ENCODE measurements at regions of chr20 and their contacts with region 1.

Region 1: GRCh38 chr20:4064144-4064909 is 49.0 kb upstream of the RNF24 start:
- H3K4me3 Mint-ChIP-seq: peak overlapping the region; percentile 39
- H3K27ac Mint-ChIP-seq: peak overlapping the region; percentile 88
- H3K4me1 Mint-ChIP-seq: peaks cover 95% of the 10 kb centered on the region
- H3K27me3 Mint-ChIP-seq: no peaks in the 10 kb centered on the region

Region 2: GRCh38 chr20:4026093-4026601 is 38.2 kb before region 1 on chr20:
- intact Hi-C with region 1: loop called (anchors 5 kb)
- H3K4me3 Mint-ChIP-seq: no peak overlapping the region
- H3K27ac Mint-ChIP-seq: peak overlapping the region; percentile 25
- H3K4me1 Mint-ChIP-seq: peaks cover 49% of the 10 kb centered on the region
- H3K27me3 Mint-ChIP-seq: no peaks in the 10 kb centered on the region

Region 3: DNA sequence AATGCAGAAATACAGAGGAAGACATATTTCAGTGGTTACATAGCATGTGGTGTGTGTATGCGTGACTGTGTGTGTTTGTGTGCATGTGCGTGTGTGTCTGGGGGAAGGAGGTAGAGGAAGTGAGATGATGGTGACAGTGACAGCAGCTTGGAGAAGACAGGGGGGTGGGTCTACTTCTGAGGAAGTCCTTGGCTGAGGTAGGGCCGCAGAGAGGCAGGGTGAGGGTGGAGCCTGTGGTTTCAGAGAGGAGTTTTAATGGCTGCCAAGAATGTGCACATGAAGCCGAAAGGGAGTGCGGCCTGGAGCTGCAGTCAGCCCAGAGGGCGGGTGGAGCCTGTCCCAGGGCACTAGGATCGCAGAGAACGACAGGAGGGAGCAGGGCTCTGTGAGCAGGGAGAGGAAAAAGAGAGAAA is 26.3 kb before region 1 on chr20:
- intact Hi-C with region 1: loop called (anchors 2 kb)
- H3K4me3 Mint-ChIP-seq: peak overlapping the region; percentile 68
- H3K27ac Mint-ChIP-seq: peak overlapping the region; percentile 93
- H3K4me1 Mint-ChIP-seq: peaks cover 51% of the 10 kb centered on the region
- H3K27me3 Mint-ChIP-seq: no peaks in the 10 kb centered on the region

Region 4: DNA sequence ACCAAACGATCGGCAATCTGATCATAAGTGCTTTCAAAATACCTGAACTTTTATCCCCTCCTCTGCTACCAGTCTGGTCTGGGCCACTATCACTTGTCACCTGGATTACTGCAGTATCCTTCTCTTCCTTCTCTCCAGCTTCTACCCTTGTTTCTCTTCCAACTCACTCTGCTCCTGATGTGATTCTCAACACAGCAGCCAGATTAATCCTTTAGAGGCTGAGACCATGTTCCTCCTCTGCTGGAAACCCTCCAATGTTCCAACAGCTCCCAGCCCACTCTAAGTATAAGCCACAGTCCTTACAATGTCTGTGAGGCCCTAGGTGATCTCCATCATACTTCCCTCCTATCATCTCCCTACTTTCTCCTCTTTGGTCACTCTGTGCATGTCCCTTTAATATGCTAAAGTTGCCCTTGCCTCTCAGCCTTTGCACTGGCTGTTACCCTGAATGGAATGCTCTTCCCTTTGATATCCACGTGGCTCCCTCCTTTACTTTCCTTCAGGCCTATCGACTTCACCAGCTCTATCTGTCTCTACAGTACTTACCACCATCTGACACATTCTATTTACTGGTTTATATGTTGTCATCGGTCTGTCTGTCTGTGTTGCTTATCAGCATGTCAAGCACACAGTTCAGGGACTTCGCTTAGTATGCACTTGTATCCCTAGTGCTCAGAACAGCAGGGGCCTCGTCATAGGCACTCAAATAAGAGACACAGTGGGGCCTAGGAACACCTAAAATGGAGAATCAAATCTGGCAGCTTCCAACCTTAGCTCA is 13.9 kb before region 1 on chr20:
- intact Hi-C with region 1: no loop called
- H3K4me3 Mint-ChIP-seq: no peak overlapping the region
- H3K27ac Mint-ChIP-seq: no peak overlapping the region
- H3K4me1 Mint-ChIP-seq: peaks cover 44% of the 10 kb centered on the region
- H3K27me3 Mint-ChIP-seq: peaks cover 3% of the 10 kb centered on the region

Measured in dendritic cell treated with granulocyte-macrophage colony-stimulating factor and Interleukin-4, amounts not matched to agents 40 ng/mL and 50 ng/mL, for 4 days (primary cell).